PC-3 (cell line): ENCODE measurements at regions of chr9 and their contacts with region 1.

Region 1: GRCh38 chr9:76810377-76810957 is 46.2 kb downstream of the PCA3 start:
- DNase-seq: peak; percentile 68
- ATAC-seq: peak; percentile 70
- H3K4me3 ChIP-seq: no peak overlapping the region
- H3K27ac ChIP-seq: no peak overlapping the region
- H3K4me1 ChIP-seq: no peaks in the 10 kb centered on the region
- H3K27me3 ChIP-seq: peaks cover 6% of the 10 kb centered on the region; the same call in 1 of the 2 replicates
- CTCF ChIP-seq: peak; percentile 85

Region 2: DNA sequence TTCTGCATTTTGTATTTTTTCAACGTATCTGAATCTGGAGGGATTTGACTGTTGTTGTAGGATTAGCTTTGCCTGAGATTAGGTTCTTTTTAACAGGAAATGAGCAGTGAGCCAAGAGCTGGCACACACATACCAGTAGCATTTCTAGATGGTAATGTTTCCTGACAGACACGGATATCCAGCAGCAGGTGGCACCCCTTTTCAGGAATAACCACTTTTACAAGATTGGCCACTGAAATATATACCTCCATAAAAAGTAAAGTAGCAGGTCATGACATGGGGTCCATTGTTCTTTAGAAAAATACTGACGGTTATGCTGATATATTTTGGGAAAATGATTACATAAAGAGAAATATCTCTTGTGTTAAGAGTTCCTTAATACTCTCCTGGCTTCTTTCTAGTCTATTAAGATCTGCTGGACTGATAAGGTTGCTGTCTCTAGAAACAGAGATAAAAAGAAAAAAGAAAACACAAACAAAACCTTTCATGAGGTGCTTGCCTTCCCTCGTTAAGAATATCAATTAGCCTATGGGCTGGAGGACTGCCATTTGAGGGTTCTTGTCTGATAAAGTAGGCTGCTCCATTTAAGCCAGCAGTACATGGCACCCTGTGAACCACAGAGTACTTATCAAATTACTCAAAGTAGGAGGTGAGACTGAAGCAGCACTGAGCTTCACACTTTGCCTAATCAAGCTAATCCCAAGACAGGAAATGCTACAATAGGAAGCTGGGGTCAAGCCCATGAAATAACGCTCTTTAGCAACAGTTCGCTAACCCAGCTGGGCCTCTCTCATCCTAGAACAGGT is 147.8 kb before region 1 on chr9:
- CTCF ChIA-PET with region 1: no interaction called
- POLR2A ChIA-PET with region 1: no interaction called
- intact Hi-C with region 1: no loop called
- DNase-seq: no peak
- ATAC-seq: no peak
- H3K4me3 ChIP-seq: no peak overlapping the region
- H3K27ac ChIP-seq: no peak overlapping the region
- H3K4me1 ChIP-seq: no peaks in the 10 kb centered on the region
- H3K27me3 ChIP-seq: no peaks in the 10 kb centered on the region
- CTCF ChIP-seq: no peak

Region 3: GRCh38 chr9:76996700-76997099 is 186.2 kb after region 1 on chr9:
- CTCF ChIA-PET with region 1: no interaction called
- POLR2A ChIA-PET with region 1: no interaction called
- intact Hi-C with region 1: loop called (anchors 1 kb)
- DNase-seq: peak; percentile 18
- ATAC-seq: peak; percentile 49; the same call in 1 of the 2 replicates
- H3K4me3 ChIP-seq: no peak overlapping the region
- H3K27ac ChIP-seq: no peak overlapping the region
- H3K4me1 ChIP-seq: no peaks in the 10 kb centered on the region
- H3K27me3 ChIP-seq: no peaks in the 10 kb centered on the region
- CTCF ChIP-seq: peak; percentile 58

Region 4: DNA sequence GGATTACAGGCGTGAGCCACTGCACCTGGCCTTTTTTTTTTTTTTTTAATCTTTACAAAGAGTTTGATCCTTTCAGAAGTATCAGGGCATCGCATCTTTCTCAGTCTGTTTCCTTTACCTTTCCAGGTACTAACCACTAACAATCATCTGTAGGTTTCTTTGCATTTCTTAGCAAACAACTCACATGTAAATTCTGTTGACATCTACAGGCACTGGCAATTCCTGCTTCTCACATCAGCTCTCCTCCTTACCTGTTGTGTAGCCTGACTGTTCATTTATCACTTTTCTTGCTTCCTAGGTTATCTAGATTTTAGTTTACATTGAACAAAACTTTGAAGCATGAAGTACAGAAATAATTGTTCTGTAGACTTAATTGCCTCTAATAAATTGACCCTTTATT is 339.4 kb after region 1 on chr9:
- CTCF ChIA-PET with region 1: interaction called, 4 read pairs
- POLR2A ChIA-PET with region 1: no interaction called
- intact Hi-C with region 1: loop called (anchors 1 kb)
- DNase-seq: no peak
- ATAC-seq: no peak
- H3K4me3 ChIP-seq: no peak overlapping the region
- H3K27ac ChIP-seq: no peak overlapping the region
- H3K4me1 ChIP-seq: no peaks in the 10 kb centered on the region
- H3K27me3 ChIP-seq: peaks cover 11% of the 10 kb centered on the region; the same call in 1 of the 2 replicates
- CTCF ChIP-seq: no peak